ENCODE measurements at regions of chr3 and their contacts with region 1.

Region 1: GRCh38 chr3:134299185-134299887 is 48.7 kb upstream of the RYK start:
- DNase-seq: no peak
- H3K4me3 ChIP-seq: no peak overlapping the region
- H3K27ac ChIP-seq: no peak overlapping the region
- H3K4me1 ChIP-seq: no peaks in the 10 kb centered on the region
- H3K27me3 ChIP-seq: no peaks in the 10 kb centered on the region
- CTCF ChIP-seq: peak; percentile 48

Region 2: DNA sequence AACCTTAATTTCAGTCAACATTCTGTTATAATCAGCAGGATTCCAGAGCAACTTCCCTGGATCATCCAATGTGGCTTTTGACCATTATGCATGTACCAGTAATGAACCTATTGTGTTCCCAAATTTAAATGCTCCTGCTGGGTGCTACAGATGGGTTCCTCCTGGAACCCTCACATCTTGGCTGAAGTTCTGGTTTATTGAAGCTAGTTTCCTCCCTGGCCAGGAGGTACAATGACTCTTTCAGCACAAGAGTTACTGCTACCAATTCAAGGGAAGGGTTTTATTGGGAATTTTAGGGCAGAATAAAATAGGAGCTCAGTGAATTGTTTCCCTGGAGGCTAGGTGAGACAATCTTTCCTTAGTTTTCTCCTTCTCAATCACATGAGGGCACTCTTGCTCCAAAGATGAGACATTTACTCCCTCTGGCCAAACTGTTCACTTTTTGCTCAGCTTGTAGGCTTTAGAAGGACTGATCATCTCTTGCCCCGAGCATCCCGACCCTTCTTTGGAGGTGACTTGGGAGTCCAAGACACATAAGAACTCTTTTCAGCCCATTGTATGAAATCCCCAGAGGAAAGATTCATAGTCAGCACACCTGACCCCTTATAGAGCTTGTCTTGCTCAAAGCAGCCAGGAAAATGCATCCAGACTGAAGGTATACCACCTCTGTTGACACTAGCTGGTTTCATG is 1568.3 kb before region 1 on chr3:
- CTCF ChIA-PET with region 1: interaction called, 12 read pairs
- POLR2A ChIA-PET with region 1: no interaction called
- intact Hi-C with region 1: loop called (anchors 10 kb)
- DNase-seq: peak in 1 of 2 experiments; percentile 25
- H3K4me3 ChIP-seq: no peak overlapping the region
- H3K27ac ChIP-seq: no peak overlapping the region
- H3K4me1 ChIP-seq: no peaks in the 10 kb centered on the region
- H3K27me3 ChIP-seq: no peaks in the 10 kb centered on the region
- CTCF ChIP-seq: peak; percentile 51; the same call in 1 of the 2 replicates

Region 3: GRCh38 chr3:133821767-133822638 is 477.3 kb before region 1 on chr3:
- CTCF ChIA-PET with region 1: no interaction called
- POLR2A ChIA-PET with region 1: no interaction called
- intact Hi-C with region 1: loop called (anchors 2 kb)
- DNase-seq: no peak
- H3K4me3 ChIP-seq: no peak overlapping the region
- H3K27ac ChIP-seq: no peak overlapping the region
- H3K4me1 ChIP-seq: no peaks in the 10 kb centered on the region
- H3K27me3 ChIP-seq: no peaks in the 10 kb centered on the region
- CTCF ChIP-seq: no peak

Region 4: DNA sequence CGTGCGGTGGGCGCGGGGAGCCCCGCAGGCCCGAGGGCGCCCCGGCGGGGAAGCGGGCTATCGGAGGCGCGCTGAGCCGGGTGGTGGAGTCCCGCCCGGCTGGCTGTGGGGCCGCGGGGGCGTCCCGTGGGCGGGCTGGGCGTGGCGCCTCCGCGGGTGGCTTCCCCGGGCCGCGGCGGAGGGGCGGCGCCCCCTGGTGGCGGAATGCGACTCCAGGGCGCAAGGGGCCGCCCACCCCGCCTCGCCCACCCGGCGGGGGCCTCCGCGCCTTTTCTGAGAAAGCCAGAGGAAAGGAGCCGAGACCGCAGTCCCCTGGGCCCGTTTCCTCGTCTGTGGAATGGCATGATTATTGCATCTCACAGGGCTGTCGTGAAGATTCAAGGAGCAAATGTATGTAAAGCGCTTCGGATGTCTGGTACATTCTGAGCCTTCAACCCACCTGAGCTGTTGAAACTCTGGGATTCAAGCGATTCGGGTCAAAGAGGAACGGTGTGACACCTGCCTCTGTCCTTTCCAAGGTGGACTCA is 371.7 kb before region 1 on chr3:
- CTCF ChIA-PET with region 1: no interaction called
- POLR2A ChIA-PET with region 1: no interaction called
- intact Hi-C with region 1: loop called (anchors 2 kb)
- DNase-seq: no peak
- H3K4me3 ChIP-seq: no peak overlapping the region
- H3K27ac ChIP-seq: no peak overlapping the region
- H3K4me1 ChIP-seq: no peaks in the 10 kb centered on the region
- H3K27me3 ChIP-seq: 0 out of 2 replicates have a peak, but pooled peaks cover 5% of the 10 kb centered on the region
- CTCF ChIP-seq: no peak

Region 5: GRCh38 chr3:134212906-134213665 is 86.2 kb before region 1 on chr3:
- CTCF ChIA-PET with region 1: interaction called, 12 read pairs
- POLR2A ChIA-PET with region 1: interaction called, 3 read pairs
- intact Hi-C with region 1: loop called (anchors 1 kb)
- DNase-seq: peak; percentile 71 to 90
- H3K4me3 ChIP-seq: no peak overlapping the region
- H3K27ac ChIP-seq: no peak overlapping the region
- H3K4me1 ChIP-seq: no peaks in the 10 kb centered on the region
- H3K27me3 ChIP-seq: no peaks in the 10 kb centered on the region
- CTCF ChIP-seq: peak; percentile 95

Region 6: GRCh38 chr3:134260984-134261383 is 38.4 kb before region 1 on chr3:
- CTCF ChIA-PET with region 1: interaction called, 7 read pairs
- POLR2A ChIA-PET with region 1: no interaction called
- intact Hi-C with region 1: loop called (anchors 5 kb)
- DNase-seq: peak; percentile 34 to 61
- H3K4me3 ChIP-seq: no peak overlapping the region
- H3K27ac ChIP-seq: 0 out of 2 replicates have a peak overlapping the region, but pooled peaks have one; percentile 21
- H3K4me1 ChIP-seq: peaks cover 18% of the 10 kb centered on the region
- H3K27me3 ChIP-seq: no peaks in the 10 kb centered on the region
- CTCF ChIP-seq: no peak